ENCODE measurements at regions of chr12 and their contacts with region 1.

Region 1: GRCh38 chr12:47190271-47190750 is 110.6 kb upstream of the AMIGO2 start:
- DNase-seq: no peak
- ATAC-seq: no peak

Region 2: DNA sequence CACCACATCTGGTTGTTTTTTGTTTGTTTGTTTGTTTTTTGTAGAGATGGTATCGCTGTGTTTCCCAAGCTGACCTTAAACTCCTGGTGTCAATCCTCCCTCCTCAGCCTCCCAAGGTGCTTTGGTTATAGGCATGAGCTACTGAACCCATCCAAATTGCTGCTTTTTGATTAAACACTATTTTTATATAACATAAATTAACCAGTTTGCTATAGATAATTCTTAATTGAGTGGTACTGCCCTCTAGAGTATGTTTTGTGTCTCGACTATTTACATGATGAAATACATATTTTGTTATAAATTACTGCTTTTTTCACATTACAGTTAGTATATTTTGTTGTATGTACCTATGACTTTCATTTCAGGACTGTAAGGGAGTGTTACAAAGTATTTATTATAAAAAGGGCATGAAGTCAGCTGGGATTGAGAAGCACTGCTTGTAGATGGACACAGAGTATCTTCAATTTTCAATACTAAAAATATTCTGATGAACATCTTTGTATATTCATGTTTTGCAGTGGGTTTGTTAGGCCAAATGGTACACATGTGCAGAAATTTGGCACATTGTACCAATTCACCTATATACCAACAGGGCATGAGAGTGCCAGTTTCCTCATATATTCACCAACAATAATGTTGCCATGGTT is 1185.0 kb before region 1 on chr12:
- intact Hi-C with region 1: loop called (anchors 5 kb)
- DNase-seq: no peak
- ATAC-seq: no peak